GM10248 (cell line): ENCODE measurements at regions of chr14 and their contacts with region 1.

Region 1: DNA sequence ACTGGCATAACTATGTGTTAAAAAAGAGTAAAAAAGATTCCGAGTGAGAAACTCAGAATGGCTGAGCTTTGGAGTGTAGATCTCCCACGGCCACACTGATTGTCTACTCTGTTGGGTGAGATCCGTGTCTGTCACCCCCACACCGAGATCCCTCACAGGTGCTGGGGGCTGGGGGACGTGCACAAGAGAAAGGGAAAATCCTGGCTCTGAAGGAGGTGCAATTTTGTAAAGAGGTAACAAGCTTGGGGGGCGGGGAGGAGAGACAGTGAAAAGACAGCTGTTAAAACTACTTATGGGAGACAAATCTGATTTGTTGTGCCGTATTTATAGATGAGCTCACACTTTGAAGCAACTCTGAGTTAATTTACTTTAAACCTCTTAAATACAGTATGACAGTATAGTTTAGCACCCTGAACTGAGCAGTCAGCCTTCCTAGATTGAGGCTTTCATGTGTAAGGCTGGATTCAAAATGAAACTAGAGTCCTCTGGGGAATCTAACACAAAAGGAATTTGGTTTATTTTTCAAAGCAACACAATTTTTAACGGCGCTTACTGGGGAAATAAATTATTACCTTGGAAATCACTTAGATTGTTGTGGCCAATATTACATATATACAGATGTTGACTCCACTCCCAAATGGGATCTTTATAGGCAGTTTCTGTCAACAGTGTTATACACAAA is 167.4 kb upstream of the RGS6 start:
- DNase-seq: no peak
- CTCF ChIP-seq: no peak

Region 2: DNA sequence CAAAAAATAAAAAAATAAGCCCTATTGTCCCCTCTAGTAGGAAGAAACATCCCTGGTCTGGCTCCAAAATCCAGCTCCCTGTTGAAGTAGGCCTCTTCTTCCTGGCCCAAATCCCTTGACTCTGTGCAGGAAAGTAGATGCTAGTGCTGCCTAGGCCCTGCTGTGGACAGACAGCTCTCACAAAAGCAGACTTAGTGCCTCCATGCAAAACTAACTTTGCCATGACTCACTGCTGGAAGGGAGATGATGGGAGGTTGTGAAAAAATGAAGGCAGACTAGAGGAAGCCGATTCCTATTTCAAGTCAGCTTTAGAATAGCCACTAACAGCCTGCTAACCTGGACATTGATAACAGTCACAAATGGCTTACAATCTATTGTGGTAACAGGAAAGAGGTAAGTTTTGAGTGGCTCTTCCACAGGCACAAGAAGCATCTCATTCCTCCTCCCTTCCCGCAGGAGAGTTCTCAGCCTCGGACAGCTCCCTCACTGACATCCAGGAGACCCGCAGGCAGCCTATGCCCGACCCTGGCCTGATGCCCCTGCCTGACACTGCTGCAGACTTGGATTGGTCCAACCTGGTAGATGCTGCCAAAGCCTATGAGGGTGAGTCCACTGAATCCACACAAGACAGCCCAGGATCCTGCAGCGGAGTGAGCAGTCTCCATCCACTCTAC is 31.5 kb before region 1 on chr14:
- CTCF ChIA-PET with region 1: no interaction called
- POLR2A ChIA-PET with region 1: no interaction called
- DNase-seq: no peak
- CTCF ChIP-seq: no peak

Region 3: GRCh38 chr14:71776471-71777360 is 11.9 kb after region 1 on chr14:
- CTCF ChIA-PET with region 1: interaction called, 11 read pairs
- POLR2A ChIA-PET with region 1: no interaction called
- DNase-seq: no peak
- CTCF ChIP-seq: no peak

Region 4: GRCh38 chr14:71812693-71813092 is 47.9 kb after region 1 on chr14:
- CTCF ChIA-PET with region 1: no interaction called
- POLR2A ChIA-PET with region 1: no interaction called
- DNase-seq: no peak
- CTCF ChIP-seq: no peak

Region 5: DNA sequence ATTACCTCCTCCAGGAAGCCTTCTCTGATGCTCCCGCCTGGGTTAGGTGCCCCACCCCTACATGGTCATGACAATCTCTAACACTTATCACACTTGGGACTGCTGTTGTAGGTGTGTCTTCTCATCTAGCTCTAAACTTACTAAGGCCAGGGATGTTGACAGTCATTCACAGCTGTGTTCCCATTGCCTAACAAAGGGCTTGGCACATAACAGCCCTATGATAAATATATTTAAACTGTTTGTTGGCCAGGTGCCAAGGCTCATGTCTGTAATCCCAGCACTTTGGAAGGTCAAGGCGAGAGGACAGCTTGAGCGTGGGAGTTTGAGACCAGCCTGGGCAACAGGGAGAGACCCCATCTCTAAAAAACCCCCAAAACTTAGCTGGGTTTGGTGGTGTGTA is 68.6 kb after region 1 on chr14:
- CTCF ChIA-PET with region 1: interaction called, 3 read pairs
- POLR2A ChIA-PET with region 1: interaction called, 10 read pairs
- DNase-seq: no peak
- CTCF ChIP-seq: no peak